Common myeloid progenitor, CD34-positive (primary cell): ENCODE measurements at regions of chr3 and their contacts with region 1.

Region 1: GRCh38 chr3:66822186-66823008 is 175.7 kb upstream of the KBTBD8 start:
- DNase-seq: peak; percentile 57 to 79 (median 71)
- H3K4me3 ChIP-seq: no peak overlapping the region
- H3K27ac ChIP-seq: no peak overlapping the region
- H3K4me1 ChIP-seq: no peaks in the 10 kb centered on the region
- H3K27me3 ChIP-seq: peaks cover 0 to 3% (median 0%) of the 10 kb centered on the region in 5 experiments

Region 2: GRCh38 chr3:66253790-66254620 is 568.4 kb before region 1 on chr3:
- CTCF ChIA-PET with region 1: interaction called, 160 read pairs
- POLR2A ChIA-PET with region 1: no interaction called
- DNase-seq: peak; percentile 36 to 65 (median 55)
- H3K4me3 ChIP-seq: no peak overlapping the region
- H3K27ac ChIP-seq: no peak overlapping the region
- H3K4me1 ChIP-seq: peaks cover 0 to 3% (median 1%) of the 10 kb centered on the region in 4 experiments
- H3K27me3 ChIP-seq: no peaks in the 10 kb centered on the region

Region 3: GRCh38 chr3:66267031-66267430 is 555.4 kb before region 1 on chr3:
- CTCF ChIA-PET with region 1: interaction called, 11 read pairs
- POLR2A ChIA-PET with region 1: no interaction called
- DNase-seq: peak in 1 of 3 donors; percentile 7
- H3K4me3 ChIP-seq: no peak overlapping the region
- H3K27ac ChIP-seq: no peak overlapping the region
- H3K4me1 ChIP-seq: no peaks in the 10 kb centered on the region
- H3K27me3 ChIP-seq: no peaks in the 10 kb centered on the region

Region 4: DNA sequence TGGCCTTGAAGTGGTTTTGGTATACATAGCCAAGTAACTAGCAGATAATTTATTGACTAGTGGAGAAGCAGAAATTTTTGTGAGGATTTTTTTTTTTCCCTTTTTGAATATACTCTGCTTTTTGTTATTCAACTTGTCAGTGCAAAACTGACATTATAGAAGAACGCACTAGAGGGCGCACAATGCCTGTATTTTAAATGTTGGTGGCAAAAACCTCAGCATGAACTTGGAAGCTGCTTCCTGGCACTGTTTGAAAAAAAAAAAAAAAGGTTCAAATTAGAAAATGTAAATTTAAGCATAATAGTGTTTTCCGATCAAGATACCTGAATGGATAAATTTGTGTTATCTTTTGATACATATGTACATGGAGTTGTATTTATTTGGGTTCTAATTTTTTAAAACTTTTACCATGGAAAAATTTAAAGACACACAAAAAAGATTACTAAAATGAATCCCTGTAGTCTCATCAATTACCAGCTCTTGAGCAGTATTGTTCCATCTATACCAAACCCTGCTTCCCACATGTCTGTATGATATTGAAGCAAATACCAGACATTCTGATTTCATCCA is 545.6 kb before region 1 on chr3:
- CTCF ChIA-PET with region 1: interaction called, 42 read pairs
- POLR2A ChIA-PET with region 1: no interaction called
- DNase-seq: peak; percentile 70 to 85 (median 79)
- H3K4me3 ChIP-seq: no peak overlapping the region
- H3K27ac ChIP-seq: no peak overlapping the region
- H3K4me1 ChIP-seq: peaks cover 0 to 3% (median 0%) of the 10 kb centered on the region in 4 experiments
- H3K27me3 ChIP-seq: no peaks in the 10 kb centered on the region

Region 5: GRCh38 chr3:66803206-66803605 is 19.2 kb before region 1 on chr3:
- CTCF ChIA-PET with region 1: interaction called, 10 read pairs
- POLR2A ChIA-PET with region 1: no interaction called
- DNase-seq: peak in 1 of 3 donors; percentile 12
- H3K4me3 ChIP-seq: no peak overlapping the region
- H3K27ac ChIP-seq: no peak overlapping the region
- H3K4me1 ChIP-seq: peaks cover 7 to 21% (median 16%) of the 10 kb centered on the region in 4 experiments
- H3K27me3 ChIP-seq: peaks cover 0 to 3% (median 3%) of the 10 kb centered on the region in 5 experiments